CD4-positive, alpha-beta T cell (primary cell): ENCODE measurements at regions of chr15 and their contacts with region 1.

Region 1: DNA sequence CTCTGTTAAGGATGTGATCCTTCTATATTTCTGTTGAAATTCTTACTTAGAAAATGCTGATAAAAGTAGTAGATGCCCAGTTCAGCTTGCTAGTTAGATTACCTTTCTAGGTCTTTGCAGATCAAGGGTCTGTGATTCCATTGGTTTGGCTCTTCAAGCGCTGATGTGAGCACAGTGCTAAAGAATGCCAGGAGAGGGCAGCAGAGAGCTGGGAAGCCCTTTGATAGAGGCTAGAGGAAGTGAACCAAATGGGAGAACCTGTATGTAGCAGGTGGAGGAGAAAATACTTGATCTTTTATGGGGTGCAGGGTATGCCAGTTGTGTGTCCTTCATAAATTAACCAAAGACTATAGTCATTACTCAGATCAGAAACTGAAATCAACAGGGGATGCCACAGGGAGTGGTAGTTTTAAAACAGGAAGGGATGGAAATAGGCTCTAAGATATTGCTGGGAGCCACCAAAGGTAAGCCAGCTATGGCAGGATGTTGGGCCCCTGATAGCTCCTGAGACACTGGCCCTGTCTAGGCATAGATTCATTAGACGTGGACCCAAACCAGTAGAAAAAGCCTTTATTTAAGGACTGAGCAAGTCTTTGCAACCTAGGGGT is 677.4 kb downstream of the SQOR start:
- DNase-seq: peak; percentile 17 to 61 (median 27)
- ATAC-seq: peak; percentile 49
- H3K4me3 ChIP-seq: no peak overlapping the region
- H3K4me3 Mint-ChIP-seq: no peak overlapping the region
- H3K27ac ChIP-seq: no peak overlapping the region
- H3K27ac Mint-ChIP-seq: no peak overlapping the region
- H3K4me1 ChIP-seq: no peaks in the 10 kb centered on the region
- H3K4me1 Mint-ChIP-seq: no peaks in the 10 kb centered on the region
- H3K27me3 ChIP-seq: no peaks in the 10 kb centered on the region
- H3K27me3 Mint-ChIP-seq: no peaks in the 10 kb centered on the region
- CTCF ChIP-seq: peak; percentile 72

Region 2: DNA sequence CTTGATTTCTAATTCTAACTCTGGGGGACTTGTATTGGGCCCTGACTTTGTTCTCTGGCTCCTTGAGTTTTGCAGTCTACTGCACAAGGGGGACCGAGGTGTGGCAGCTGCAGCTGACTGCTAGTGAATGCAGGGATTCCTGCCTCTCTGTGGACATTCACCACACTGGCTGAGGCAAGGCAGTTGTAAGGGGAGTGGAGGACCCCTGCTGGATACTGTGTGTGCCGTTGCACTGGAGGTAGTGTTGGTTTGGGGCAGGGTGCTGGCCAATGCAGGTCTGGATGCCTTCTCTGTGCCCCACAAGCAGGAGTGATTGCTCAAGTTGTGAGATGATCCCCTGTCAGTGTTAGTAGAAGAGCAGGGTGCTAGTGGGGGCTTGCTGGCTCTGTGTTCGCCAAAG is 51.3 kb before region 1 on chr15:
- CTCF ChIA-PET with region 1: no interaction called
- POLR2A ChIA-PET with region 1: no interaction called
- intact Hi-C with region 1: no loop called
- DNase-seq: no peak
- ATAC-seq: no peak
- H3K4me3 ChIP-seq: no peak overlapping the region
- H3K4me3 Mint-ChIP-seq: no peak overlapping the region
- H3K27ac ChIP-seq: no peak overlapping the region
- H3K27ac Mint-ChIP-seq: no peak overlapping the region
- H3K4me1 ChIP-seq: no peaks in the 10 kb centered on the region
- H3K4me1 Mint-ChIP-seq: no peaks in the 10 kb centered on the region
- H3K27me3 ChIP-seq: no peaks in the 10 kb centered on the region
- H3K27me3 Mint-ChIP-seq: no peaks in the 10 kb centered on the region
- CTCF ChIP-seq: no peak

Region 3: GRCh38 chr15:46685681-46686080 is 373.4 kb after region 1 on chr15:
- CTCF ChIA-PET with region 1: no interaction called
- POLR2A ChIA-PET with region 1: no interaction called
- intact Hi-C with region 1: no loop called
- DNase-seq: no peak
- ATAC-seq: no peak
- H3K4me3 ChIP-seq: no peak overlapping the region
- H3K4me3 Mint-ChIP-seq: no peak overlapping the region
- H3K27ac ChIP-seq: no peak overlapping the region
- H3K27ac Mint-ChIP-seq: no peak overlapping the region
- H3K4me1 ChIP-seq: no peaks in the 10 kb centered on the region
- H3K4me1 Mint-ChIP-seq: no peaks in the 10 kb centered on the region
- H3K27me3 ChIP-seq: no peaks in the 10 kb centered on the region
- H3K27me3 Mint-ChIP-seq: no peaks in the 10 kb centered on the region
- CTCF ChIP-seq: no peak

Region 4: GRCh38 chr15:47987908-47988532 is 1675.8 kb after region 1 on chr15:
- CTCF ChIA-PET with region 1: no interaction called
- POLR2A ChIA-PET with region 1: no interaction called
- intact Hi-C with region 1: loop called in 1 of 2 experiments (anchors 5 kb)
- DNase-seq: peak in 3 of 14 experiments; percentile 18 to 42 (median 41)
- ATAC-seq: peak; percentile 46
- H3K4me3 ChIP-seq: no peak overlapping the region
- H3K4me3 Mint-ChIP-seq: no peak overlapping the region
- H3K27ac ChIP-seq: no peak overlapping the region
- H3K27ac Mint-ChIP-seq: no peak overlapping the region
- H3K4me1 ChIP-seq: no peaks in the 10 kb centered on the region
- H3K4me1 Mint-ChIP-seq: no peaks in the 10 kb centered on the region
- H3K27me3 ChIP-seq: no peaks in the 10 kb centered on the region
- H3K27me3 Mint-ChIP-seq: no peaks in the 10 kb centered on the region
- CTCF ChIP-seq: no peak